ENCODE measurements at regions of chr12 and their contacts with region 1.

Region 1: DNA sequence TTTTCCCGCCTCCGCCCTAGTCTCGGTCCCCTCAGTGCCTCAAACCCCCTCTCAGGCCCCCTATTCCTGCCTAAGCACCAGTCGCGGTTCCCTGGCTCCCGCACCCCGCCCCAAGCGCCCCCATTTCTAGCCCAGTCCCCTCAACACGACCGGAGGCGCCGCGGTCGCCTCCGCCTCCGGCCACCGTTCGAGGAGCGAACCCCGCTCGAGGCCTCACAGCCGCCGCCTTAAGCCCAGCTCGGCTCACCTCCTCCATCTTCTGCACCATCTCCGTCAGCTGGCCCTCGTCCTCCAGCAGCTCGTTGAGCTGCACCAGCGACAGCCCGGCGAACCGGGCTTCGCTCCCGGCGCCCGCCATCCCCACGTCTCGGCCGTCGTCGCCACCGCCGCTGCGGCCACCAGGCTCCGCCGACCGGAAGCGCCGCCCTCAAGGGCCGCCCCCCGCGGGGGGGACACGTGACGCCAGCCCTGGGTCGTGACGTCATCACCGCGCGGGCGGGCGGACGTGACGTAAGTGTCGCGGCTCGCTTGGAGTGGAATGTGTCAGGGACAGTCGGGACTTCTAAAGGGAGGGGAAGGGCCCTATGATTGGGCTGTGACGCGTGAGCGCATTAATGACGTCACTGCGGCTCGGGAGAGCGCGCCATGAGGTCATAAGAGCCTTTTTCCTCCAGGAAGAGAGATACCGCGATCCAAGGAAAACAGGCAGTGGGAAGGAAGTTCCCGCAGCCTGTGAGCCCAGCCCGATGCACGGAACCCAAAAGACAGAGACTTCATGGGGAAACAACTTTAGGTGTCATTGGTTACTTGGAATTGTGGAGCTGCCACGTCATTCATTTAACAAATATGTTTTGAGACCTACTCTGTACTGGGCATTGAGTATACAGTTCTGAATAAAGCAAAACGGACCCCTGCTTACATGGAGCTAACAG is at the start of gene VPS37B:
- DNase-seq: peak; percentile 81
- H3K4me3 ChIP-seq: peak within 1 kb of the TSS; percentile 83 to 89 (median 86)
- H3K27ac ChIP-seq: peak within 1 kb of the TSS; percentile 99
- H3K4me1 ChIP-seq: peaks cover 57% of the 10 kb centered on the region
- H3K27me3 ChIP-seq: no peaks in the 10 kb centered on the region
- CTCF ChIP-seq: no peak
- total RNA-seq, gene VPS37B: 30.8 to 60.7 TPM

Region 2: DNA sequence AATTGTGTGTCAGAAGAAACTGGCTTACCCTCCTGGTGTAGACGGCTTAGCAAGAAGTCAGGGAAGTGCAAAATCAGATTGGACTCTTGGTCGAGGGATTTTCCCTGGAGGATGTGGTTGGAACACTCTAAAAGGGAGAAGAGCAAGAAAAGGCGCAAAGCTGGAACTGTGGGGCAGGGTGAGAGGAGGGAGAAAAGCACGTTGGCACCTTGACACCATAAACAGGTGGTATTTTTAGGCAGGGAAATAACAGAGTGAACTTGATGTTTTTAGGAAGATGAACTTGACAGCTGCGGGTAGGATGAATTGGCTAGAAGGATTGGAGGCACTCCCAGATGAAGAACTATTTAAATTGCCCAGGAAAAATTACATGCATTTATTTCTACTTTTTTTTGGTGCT is 260.5 kb before region 1 on chr12:
- CTCF ChIA-PET with region 1: no interaction called
- dilution Hi-C with region 1: no loop called
- in situ Hi-C with region 1: no loop called
- intact Hi-C with region 1: no loop called
- DNase-seq: no peak
- H3K4me3 ChIP-seq: no peak overlapping the region
- H3K27ac ChIP-seq: no peak overlapping the region
- H3K4me1 ChIP-seq: no peaks in the 10 kb centered on the region
- H3K27me3 ChIP-seq: no peaks in the 10 kb centered on the region
- CTCF ChIP-seq: no peak

Region 3: DNA sequence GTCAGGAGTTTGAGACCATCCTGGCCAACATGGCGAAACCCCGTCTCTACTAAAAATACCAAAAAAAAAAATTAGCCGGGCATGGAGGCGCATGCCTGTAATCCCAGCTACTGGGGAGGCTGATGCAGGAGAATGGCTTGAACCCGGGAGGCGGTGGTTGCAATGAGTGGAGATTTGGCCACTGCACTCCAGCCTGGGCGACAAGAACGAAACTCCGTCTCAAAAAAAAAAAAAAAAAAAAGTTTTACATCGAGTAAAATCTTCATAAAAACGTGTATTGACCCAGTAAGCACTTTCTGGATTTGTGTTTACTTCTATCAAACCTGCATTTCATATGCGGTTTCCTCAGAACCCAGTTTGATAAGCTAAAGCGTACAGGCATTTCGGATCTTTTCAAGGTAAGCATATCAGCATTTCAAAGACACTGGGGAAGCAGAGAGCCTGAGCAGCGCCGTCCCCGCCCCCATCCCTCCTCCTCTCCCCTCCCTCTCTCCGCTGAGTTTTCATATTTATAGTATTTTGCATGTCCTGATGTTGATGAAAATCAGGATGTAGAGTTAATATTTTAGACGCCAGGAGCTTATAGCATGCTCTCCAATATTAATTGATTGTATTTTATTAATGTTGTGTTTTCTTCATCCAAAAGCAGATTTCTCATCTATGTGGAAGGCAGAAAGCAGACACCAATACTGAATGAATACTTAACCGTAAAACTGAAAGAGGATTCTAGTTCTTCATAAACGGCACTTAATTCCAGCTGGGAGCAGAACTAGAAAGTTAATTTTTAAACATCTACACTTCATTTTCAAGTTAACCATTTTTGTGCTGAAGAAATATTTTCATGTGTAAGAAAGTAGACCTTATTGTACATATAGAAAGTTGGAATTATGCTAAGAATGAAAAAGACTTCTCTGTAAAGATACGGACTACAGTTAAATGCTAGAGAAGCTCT is 69.9 kb before region 1 on chr12:
- CTCF ChIA-PET with region 1: no interaction called
- dilution Hi-C with region 1: loop called (anchors 5 kb)
- in situ Hi-C with region 1: no loop called
- intact Hi-C with region 1: no loop called
- DNase-seq: no peak
- H3K4me3 ChIP-seq: peak overlapping the region; percentile 29 to 82 (median 58)
- H3K27ac ChIP-seq: peak overlapping the region; percentile 51
- H3K4me1 ChIP-seq: peaks cover 8% of the 10 kb centered on the region
- H3K27me3 ChIP-seq: no peaks in the 10 kb centered on the region
- CTCF ChIP-seq: no peak

Region 4: DNA sequence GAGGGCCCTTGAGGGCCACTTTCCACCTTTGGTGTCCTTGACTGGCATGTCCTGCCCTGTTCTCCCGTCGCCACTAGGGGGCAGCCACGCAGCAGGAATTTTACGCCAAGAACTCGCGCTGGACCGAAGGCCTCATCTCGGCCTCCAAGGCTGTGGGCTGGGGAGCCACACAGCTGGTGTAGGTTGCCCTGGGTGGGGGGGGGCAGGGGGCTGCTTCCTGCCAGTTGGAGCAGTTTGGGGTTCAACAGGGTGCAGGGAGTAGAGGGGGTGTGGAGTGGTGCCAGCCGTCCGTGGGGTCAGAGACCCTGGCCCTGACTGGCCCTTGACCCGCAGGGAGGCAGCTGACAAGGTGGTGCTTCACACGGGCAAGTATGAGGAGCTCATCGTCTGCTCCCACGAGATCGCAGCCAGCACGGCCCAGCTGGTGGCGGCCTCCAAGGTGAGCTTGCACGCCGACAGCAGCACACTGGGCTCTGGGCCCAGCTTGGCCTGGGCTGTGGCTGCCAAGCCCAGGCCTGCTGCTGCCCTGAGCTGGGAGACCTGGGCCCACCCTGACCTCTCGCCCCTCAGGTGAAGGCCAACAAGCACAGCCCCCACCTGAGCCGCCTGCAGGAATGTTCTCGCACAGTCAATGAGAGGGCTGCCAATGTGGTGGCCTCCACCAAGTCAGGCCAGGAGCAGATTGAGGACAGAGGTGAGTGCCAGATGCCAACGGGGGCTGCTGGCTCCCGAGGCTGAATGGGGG is 35.5 kb before region 1 on chr12:
- CTCF ChIA-PET with region 1: no interaction called
- dilution Hi-C with region 1: no loop called
- in situ Hi-C with region 1: no loop called
- intact Hi-C with region 1: loop called (anchors 2 kb)
- DNase-seq: peak; percentile 64
- H3K4me3 ChIP-seq: no peak overlapping the region
- H3K27ac ChIP-seq: no peak overlapping the region
- H3K4me1 ChIP-seq: peaks cover 26% of the 10 kb centered on the region
- H3K27me3 ChIP-seq: no peaks in the 10 kb centered on the region
- CTCF ChIP-seq: peak; percentile 66 to 94

Region 5: DNA sequence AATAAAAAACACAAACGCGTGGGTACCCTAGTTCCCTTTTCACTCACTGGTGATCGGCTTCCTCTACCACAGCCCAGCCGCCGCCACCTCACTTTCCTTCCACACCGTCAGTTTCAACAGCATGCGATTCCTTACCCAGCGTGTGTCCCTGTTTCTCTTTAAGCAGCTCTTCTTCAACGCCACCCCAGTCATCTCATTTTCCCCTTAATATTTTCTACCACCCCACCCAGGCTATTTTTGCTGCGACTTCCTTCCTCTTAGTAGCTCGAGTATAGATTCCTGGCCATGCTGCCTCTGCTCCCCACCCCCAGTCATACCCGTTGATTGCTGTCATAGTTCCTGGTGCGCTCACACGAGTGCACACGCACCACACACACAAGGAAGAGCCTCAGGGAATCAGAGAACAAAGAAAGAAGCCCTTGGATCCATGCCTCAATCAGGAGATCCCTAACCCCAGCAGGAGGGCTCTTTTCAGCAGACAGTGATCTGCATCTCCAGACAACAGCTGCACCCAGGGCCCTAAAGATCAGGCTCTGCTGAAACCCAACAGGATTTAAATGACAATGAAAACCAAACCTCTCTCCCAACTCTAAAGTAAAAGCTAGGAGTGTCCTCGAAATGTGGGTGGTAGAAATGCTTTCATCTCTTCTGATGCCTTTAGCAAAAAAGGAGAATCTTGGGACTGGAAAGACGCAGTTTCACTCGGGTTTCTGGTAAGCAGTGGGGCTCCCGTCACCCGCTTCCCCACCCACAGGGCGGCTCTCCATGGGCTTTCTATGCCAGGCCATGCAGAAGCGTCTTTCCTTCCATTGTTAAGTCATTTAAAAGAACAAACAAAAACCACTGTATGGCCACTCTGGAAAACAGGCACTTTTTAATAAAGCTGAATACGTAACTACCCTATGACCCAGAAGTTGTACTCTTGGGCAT is 23.9 kb before region 1 on chr12:
- CTCF ChIA-PET with region 1: no interaction called
- dilution Hi-C with region 1: no loop called
- in situ Hi-C with region 1: no loop called
- intact Hi-C with region 1: loop called (anchors 1 kb)
- DNase-seq: peak; percentile 70
- H3K4me3 ChIP-seq: no peak overlapping the region
- H3K27ac ChIP-seq: peak overlapping the region; percentile 43
- H3K4me1 ChIP-seq: peaks cover 49% of the 10 kb centered on the region
- H3K27me3 ChIP-seq: no peaks in the 10 kb centered on the region
- CTCF ChIP-seq: no peak

Region 6: DNA sequence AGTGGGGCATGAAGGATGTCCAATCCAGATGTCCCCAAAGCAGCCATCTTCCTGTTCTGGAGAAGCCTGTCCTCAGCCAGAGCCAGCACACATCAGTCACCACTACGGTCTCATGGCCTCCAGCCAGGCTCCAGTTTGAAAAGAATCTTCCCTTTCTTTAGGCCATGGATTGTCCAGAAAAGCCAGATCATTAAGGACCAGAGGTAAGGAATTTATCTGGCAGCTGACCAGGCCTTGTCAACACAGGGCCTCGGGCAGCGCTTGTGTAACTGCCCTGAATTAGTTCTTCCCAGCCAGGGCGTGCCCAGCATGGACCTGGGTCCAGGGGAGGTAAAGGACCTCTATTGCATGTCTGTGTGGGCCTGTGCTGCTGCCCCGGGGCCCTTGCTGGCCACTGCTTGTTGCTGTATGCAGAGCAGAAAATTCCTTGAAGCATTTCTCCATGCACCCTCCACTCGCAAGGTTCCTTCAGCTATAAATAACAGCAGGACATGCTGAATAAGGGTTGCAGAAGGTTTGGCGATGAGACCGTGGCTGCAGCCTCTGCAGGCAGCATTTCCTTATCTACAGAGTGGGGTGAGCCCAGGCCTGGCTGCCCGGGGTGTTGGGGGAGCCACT is 21.6 kb after region 1 on chr12:
- CTCF ChIA-PET with region 1: no interaction called
- dilution Hi-C with region 1: no loop called
- in situ Hi-C with region 1: no loop called
- intact Hi-C with region 1: loop called (anchors 1 kb)
- DNase-seq: peak; percentile 68
- H3K4me3 ChIP-seq: no peak overlapping the region
- H3K27ac ChIP-seq: peak overlapping the region; percentile 25
- H3K4me1 ChIP-seq: peaks cover 26% of the 10 kb centered on the region
- H3K27me3 ChIP-seq: no peaks in the 10 kb centered on the region
- CTCF ChIP-seq: no peak

Measured in mammary epithelial cell (primary cell).